GM12878 (cell line): ENCODE measurements at regions of chrX and their contacts with region 1.

Region 1: DNA sequence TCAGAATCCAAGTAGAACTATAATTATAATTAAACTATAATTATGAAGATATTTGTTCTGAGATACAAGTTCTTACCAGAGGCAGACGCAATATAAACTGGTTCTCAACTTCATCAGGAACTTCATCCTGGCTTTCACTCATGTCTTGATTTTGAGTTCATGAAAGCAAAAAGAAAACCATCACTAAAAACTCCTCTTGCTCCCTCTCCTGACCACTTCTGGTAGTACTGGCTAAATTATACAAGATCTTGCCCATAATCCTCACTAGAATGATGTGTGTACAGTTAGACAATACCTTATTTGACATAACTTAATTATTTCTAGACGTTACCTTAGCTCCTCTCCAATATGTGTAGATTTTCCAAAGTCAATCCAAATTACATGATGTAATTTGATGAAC is 3.7 kb downstream of the TAF7L start:
- DNase-seq: peak; percentile 3
- ATAC-seq: peak; percentile 80
- H3K4me3 ChIP-seq: no peak overlapping the region
- H3K27ac ChIP-seq: no peak overlapping the region
- H3K4me1 ChIP-seq: no peaks in the 10 kb centered on the region
- H3K27me3 ChIP-seq: no peaks in the 10 kb centered on the region
- CTCF ChIP-seq: peak; percentile 55 to 58 (median 57); a peak in 5 of 6 replicates
- EP300 ChIP-seq: no peak
- POLR2A ChIP-seq: no peak
- RAD21 ChIP-seq: peak; percentile 62

Region 2: DNA sequence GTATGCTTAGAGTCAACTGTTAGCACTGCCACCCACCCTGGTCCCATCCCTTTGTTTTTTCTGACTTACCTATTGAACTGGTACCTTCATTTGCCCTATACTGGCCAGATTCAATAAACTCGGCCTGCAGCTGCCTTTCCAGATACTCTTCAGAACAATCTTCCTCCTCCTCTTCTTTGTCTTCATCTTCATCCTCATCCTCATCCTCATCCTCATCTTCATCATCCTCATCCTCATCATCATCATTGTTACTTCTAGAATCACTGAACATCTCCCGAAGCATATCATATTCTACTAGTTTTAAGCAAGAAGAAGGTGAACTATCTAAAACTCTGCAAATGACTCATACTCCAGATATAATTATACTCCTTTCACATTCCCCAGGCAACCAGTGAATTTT is 11.2 kb before region 1 on chrX:
- CTCF ChIA-PET with region 1: interaction called, 11 read pairs
- POLR2A ChIA-PET with region 1: no interaction called
- RAD21 ChIA-PET with region 1: no interaction called
- SMC1A ChIA-PET with region 1: no interaction called
- in situ Hi-C with region 1: no loop called
- intact Hi-C with region 1: no loop called
- DNase-seq: no peak
- ATAC-seq: no peak
- H3K4me3 ChIP-seq: no peak overlapping the region
- H3K27ac ChIP-seq: no peak overlapping the region
- H3K4me1 ChIP-seq: no peaks in the 10 kb centered on the region
- H3K27me3 ChIP-seq: no peaks in the 10 kb centered on the region
- CTCF ChIP-seq: no peak
- EP300 ChIP-seq: no peak
- POLR2A ChIP-seq: no peak
- RAD21 ChIP-seq: no peak